A673 (cell line): ENCODE measurements at regions of chr4 and their contacts with region 1.

Region 1: GRCh38 chr4:83723609-83724008 is 187.7 kb downstream of the GPAT3 start:
- DNase-seq: no peak
- H3K4me3 ChIP-seq: peak overlapping the region; percentile 7
- H3K27ac ChIP-seq: peak overlapping the region; percentile 97
- H3K4me1 ChIP-seq: peaks cover 45% of the 10 kb centered on the region
- H3K27me3 ChIP-seq: no peaks in the 10 kb centered on the region
- CTCF ChIP-seq: no peak

Region 2: DNA sequence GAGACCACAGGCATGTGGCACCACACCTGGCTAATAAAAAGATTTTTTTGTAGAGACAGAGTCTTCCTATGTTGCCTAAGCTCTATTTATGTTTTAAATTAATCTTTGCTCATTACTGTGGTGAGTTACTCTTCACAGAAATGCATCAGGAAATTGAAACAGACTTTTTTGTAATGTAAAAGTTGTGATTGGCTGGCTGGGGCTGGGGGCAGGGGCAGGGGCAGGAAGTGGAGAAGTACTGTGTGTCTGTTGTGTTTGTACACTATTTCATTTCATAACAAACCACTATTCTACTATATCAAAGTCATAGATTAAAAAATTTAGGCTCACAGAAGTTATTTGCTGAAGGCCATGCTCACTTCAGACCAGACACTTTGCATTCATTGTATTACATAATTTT is 219.6 kb before region 1 on chr4:
- CTCF ChIA-PET with region 1: no interaction called
- POLR2A ChIA-PET with region 1: no interaction called
- intact Hi-C with region 1: loop called (anchors 10 kb)
- DNase-seq: no peak
- H3K4me3 ChIP-seq: no peak overlapping the region
- H3K27ac ChIP-seq: no peak overlapping the region
- H3K4me1 ChIP-seq: no peaks in the 10 kb centered on the region
- H3K27me3 ChIP-seq: no peaks in the 10 kb centered on the region
- CTCF ChIP-seq: no peak

Region 3: GRCh38 chr4:83821493-83821892 is 97.9 kb after region 1 on chr4:
- CTCF ChIA-PET with region 1: no interaction called
- POLR2A ChIA-PET with region 1: no interaction called
- intact Hi-C with region 1: loop called (anchors 2 kb)
- DNase-seq: peak; percentile 82
- H3K4me3 ChIP-seq: no peak overlapping the region
- H3K27ac ChIP-seq: no peak overlapping the region
- H3K4me1 ChIP-seq: no peaks in the 10 kb centered on the region
- H3K27me3 ChIP-seq: no peaks in the 10 kb centered on the region
- CTCF ChIP-seq: no peak